ENCODE measurements at regions of chrX and their contacts with region 1.

Region 1: DNA sequence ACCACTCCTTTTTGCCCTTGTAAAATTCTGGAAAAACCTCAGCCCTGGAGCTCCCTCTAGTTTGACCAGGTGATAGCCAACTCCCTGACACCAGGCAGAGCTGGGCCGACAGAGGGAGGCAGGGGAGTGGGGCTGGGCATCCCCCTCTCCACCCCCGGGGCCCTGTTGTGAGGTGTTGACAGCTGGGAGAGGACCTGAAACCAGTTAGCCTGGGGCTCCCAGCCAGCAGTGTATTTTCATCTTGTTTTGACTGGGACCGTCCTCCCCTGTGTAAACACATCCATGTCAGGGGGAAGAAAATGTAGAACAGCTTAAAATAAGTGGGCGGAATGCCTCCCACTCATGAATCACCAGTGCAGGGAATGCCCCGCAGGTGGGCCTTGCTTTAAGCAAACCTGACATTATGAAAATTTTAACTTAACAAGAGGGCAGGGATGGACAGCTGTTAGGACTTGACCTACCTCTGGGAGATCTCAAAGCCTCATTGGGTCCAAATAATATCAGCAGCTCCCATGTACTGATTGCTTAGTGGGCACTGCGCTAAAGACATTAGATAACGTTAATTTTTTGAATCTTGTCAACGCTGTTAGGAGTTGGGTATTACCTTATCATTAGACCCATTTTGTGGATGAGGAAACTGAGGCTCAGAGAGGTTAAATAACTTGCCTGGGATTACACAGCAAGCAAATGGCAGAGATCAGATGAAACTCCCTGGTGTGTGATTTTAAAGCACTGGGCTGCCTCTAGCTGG is 45.9 kb downstream of the TSC22D3 start:
- DNase-seq: no peak
- ATAC-seq: peak; percentile 72 to 75

Region 2: DNA sequence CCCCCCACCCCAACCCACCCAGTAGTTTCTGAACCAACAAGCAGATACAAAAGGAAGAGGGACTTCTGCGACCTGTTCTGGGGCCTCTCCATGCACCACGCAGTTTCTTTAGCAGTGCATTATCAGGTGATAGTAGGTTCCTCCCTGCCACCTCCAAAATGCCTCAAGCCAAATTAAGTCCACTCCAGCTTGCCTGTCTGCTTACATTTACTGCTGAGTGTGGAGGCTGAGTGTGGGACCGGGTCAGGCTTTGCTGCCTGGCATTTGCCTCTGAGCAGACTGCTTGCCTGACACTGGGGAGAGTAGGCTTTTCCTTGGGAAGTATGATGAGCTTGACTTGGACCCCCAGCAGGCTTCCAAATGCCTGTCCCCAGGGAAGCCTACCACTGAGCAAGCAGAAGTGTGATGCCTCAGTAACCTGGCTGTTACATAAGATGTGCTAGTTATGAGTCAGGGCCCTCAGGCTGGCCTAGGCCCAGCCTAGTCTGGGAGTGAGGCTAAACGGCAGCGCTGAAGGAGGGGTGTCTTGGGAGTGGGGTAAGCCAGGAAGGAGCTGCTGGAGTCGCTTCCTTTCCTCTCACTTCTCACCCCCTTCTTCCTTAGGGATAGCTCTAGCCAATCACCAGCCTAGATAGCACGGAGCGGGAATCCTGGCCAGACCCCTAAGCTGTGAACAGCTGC is 36.9 kb after region 1 on chrX:
- intact Hi-C with region 1: loop called in 1 of 2 experiments (anchors 5 kb)
- DNase-seq: peak; percentile 49
- ATAC-seq: peak; percentile 90 to 95

Region 3: DNA sequence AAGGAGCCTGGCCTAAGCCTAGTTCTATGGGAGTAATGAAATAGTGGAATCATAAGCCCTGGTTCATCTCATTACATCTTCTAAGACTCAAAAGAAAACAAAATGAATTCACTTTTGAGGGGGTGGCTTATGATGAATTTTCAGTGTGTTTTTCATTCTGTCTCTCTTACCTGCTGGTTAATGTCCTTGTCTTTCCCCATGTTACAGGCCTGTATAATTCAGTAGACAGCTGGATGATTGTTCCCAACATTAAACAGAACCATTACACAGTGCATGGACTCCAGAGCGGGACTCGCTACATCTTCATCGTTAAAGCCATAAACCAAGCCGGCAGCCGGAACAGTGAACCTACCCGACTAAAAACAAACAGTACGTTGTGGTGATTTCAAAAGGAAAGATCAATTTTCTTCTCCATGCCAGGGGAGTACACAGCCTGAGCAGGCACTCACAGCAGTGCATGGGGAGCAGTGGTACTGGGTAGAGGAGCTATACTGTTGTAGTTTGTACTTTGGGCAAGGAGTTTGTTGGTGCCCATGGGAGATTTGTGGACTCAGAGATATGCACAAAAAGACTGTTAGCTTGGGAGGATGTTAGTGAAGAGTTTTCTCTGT is 194.5 kb after region 1 on chrX:
- intact Hi-C with region 1: no loop called
- DNase-seq: no peak
- ATAC-seq: no peak